ENCODE measurements at regions of chr17 and their contacts with region 1.

Region 1: DNA sequence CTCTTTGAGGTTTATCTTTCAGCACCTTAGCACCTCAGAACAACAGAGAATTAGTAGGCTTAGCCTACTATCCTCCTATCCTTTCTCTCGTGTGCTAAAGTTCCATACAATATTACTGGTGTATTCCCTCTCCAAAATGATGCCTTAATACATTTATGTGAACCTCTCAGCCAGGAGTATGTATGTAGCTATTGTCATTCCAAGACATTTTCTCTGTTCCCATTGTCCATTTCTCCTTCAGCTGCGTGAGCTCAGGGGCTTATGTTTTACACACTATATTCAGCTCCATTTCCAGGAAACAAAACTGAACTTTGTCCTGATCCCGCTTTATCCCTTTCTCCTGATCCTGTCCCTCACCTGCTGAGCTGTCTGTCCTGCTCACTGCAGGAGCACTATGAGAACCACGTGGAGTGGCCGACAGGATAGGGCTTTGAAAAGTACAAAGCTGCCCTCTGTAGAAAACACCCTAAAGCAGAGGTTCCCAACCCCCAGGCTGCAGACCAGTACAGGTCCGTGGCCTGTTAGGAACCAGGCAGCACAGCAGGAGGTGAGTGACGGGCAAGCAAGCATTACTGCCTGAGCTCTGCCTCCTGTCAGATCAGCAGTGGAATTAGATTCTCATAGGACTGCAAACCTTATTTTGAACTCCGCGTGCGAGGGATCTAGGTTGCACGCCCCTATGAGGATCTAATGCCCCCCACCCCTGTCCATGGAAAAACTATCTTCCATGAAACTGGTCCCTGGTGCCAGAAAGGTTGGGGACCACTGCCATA is 55.7 kb downstream of the CENPV start:
- DNase-seq: no peak
- H3K4me3 ChIP-seq: no peak overlapping the region
- H3K27ac ChIP-seq: no peak overlapping the region
- H3K4me1 ChIP-seq: peaks cover 12% of the 10 kb centered on the region
- H3K27me3 ChIP-seq: no peaks in the 10 kb centered on the region
- CTCF ChIP-seq: no peak

Region 2: GRCh38 chr17:15000661-15001060 is 1296.9 kb before region 1 on chr17:
- CTCF ChIA-PET with region 1: no interaction called
- POLR2A ChIA-PET with region 1: interaction called, 10 read pairs
- intact Hi-C with region 1: no loop called
- DNase-seq: no peak
- H3K4me3 ChIP-seq: no peak overlapping the region
- H3K27ac ChIP-seq: no peak overlapping the region
- H3K4me1 ChIP-seq: no peaks in the 10 kb centered on the region
- H3K27me3 ChIP-seq: no peaks in the 10 kb centered on the region
- CTCF ChIP-seq: no peak

Region 3: DNA sequence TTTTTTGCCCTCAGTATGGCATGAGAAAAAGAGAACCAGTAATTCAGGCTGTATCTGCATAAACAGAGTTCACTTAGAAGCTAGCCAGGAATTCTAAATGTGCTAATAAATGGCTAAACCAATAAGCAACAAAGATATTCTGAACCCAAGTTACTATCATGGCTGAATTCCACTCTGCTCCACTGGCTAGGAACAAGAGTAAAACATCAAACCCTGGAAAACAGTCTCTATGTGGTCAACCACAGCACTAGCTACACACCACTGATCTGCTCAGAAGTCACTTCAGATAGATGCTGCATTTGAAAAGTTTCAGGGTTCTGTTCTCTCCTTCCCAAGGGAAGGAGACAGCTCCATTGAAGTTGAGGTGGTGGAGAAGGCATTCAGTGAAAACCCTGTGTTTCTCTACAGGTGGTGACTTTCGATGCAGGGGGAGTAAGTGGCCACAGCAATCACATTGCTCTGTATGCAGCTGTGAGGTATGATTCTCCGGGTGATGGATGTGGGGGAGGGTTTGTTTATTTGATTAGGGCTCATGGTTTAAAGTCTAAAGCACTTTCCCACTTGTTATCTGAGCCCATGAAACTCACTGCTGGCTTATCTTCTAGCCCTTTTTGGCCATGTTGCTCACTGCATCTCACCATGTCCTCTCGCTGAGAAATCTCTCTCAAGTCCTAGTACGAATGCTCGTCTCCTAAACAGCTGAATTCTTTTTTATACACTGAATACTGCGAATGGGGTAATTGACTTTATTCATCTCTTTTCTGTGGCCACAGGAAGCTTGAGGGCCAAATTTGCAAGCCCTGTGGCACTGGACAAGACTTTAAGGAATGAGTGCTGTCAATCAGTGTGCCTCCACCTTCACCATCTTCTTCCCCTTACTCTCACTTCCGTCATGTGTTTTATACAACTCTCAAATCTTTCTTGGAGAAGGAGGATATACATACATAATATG is 15.9 kb after region 1 on chr17:
- CTCF ChIA-PET with region 1: no interaction called
- POLR2A ChIA-PET with region 1: interaction called, 32 read pairs
- intact Hi-C with region 1: no loop called
- DNase-seq: no peak
- H3K4me3 ChIP-seq: no peak overlapping the region
- H3K27ac ChIP-seq: no peak overlapping the region
- H3K4me1 ChIP-seq: no peaks in the 10 kb centered on the region
- H3K27me3 ChIP-seq: no peaks in the 10 kb centered on the region
- CTCF ChIP-seq: no peak

Measured in PC-9 (cell line).